WTC11 (cell line): ENCODE measurements at regions of chr15 and their contacts with region 1.

Region 1: GRCh38 chr15:101008158-101009139 is 89.3 kb downstream of the LRRK1 start:
- DNase-seq: peak; percentile 95
- ATAC-seq: peak; percentile 86
- H3K4me3 Mint-ChIP-seq: peak overlapping the region; percentile 80
- H3K27ac Mint-ChIP-seq: no peak overlapping the region
- H3K4me1 Mint-ChIP-seq: peaks cover 35% of the 10 kb centered on the region
- H3K27me3 Mint-ChIP-seq: peaks cover 17% of the 10 kb centered on the region
- CTCF ChIP-seq: peak; percentile 98

Region 2: GRCh38 chr15:100553468-100553867 is 455.0 kb before region 1 on chr15:
- CTCF ChIA-PET with region 1: no interaction called
- POLR2A ChIA-PET with region 1: no interaction called
- DNase-seq: no peak
- ATAC-seq: no peak
- H3K4me3 Mint-ChIP-seq: no peak overlapping the region
- H3K27ac Mint-ChIP-seq: no peak overlapping the region
- H3K4me1 Mint-ChIP-seq: no peaks in the 10 kb centered on the region
- H3K27me3 Mint-ChIP-seq: peaks cover 12% of the 10 kb centered on the region
- CTCF ChIP-seq: no peak

Region 3: GRCh38 chr15:100635406-100636071 is 372.9 kb before region 1 on chr15:
- CTCF ChIA-PET with region 1: interaction called, 16 read pairs
- POLR2A ChIA-PET with region 1: no interaction called
- DNase-seq: peak; percentile 43
- ATAC-seq: peak; percentile 75
- H3K4me3 Mint-ChIP-seq: no peak overlapping the region
- H3K27ac Mint-ChIP-seq: peak overlapping the region; percentile 72
- H3K4me1 Mint-ChIP-seq: peaks cover 48% of the 10 kb centered on the region
- H3K27me3 Mint-ChIP-seq: no peaks in the 10 kb centered on the region
- CTCF ChIP-seq: no peak

Region 4: DNA sequence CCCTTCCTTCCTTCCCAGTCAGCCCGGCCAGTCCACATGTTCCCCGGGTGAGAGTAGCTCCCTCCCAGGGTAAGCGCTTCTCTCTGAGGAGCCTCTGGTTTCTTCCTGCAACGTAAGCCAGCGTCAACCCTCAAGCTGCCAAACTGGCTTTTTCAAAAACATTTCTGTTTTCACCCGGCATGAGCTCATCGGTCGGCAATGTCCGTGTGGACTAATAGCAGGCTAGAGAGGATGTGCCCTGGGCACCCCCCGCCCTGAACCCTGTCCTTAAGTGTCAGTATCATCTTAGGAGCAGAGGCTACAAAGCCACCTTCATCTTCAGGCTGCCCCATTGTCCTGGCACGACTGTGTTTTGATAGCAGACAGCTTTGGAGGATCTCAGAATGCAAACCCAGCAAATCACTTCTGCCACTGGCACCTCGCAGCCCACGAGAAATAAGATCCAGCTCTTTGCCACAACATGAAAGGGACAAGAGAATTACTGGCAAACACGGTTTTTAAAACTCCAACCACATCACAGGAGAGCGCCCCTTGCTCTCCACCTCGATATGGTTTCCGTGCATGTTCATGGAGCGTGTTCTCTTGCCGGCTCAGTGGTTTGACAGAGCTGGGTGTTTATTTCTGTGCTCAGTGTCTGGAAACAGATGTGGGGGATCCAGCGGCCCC is 118.9 kb before region 1 on chr15:
- CTCF ChIA-PET with region 1: interaction called, 16 read pairs
- POLR2A ChIA-PET with region 1: no interaction called
- DNase-seq: no peak
- ATAC-seq: no peak; the same call in 1 of the 2 replicates
- H3K4me3 Mint-ChIP-seq: no peak overlapping the region
- H3K27ac Mint-ChIP-seq: no peak overlapping the region
- H3K4me1 Mint-ChIP-seq: peaks cover 14% of the 10 kb centered on the region
- H3K27me3 Mint-ChIP-seq: no peaks in the 10 kb centered on the region
- CTCF ChIP-seq: no peak

Region 5: GRCh38 chr15:100918034-100918689 is 90.3 kb before region 1 on chr15:
- CTCF ChIA-PET with region 1: interaction called, 253 read pairs
- POLR2A ChIA-PET with region 1: interaction called, 11 read pairs
- DNase-seq: peak; percentile 88
- ATAC-seq: peak; percentile 88
- H3K4me3 Mint-ChIP-seq: peak overlapping the region; percentile 66
- H3K27ac Mint-ChIP-seq: no peak overlapping the region
- H3K4me1 Mint-ChIP-seq: peaks cover 18% of the 10 kb centered on the region
- H3K27me3 Mint-ChIP-seq: peaks cover 58% of the 10 kb centered on the region
- CTCF ChIP-seq: peak; percentile 85

Region 6: GRCh38 chr15:100987143-100987542 is 21.3 kb before region 1 on chr15:
- CTCF ChIA-PET with region 1: interaction called, 49 read pairs
- POLR2A ChIA-PET with region 1: no interaction called
- DNase-seq: no peak
- ATAC-seq: no peak
- H3K4me3 Mint-ChIP-seq: no peak overlapping the region
- H3K27ac Mint-ChIP-seq: no peak overlapping the region
- H3K4me1 Mint-ChIP-seq: peaks cover 13% of the 10 kb centered on the region
- H3K27me3 Mint-ChIP-seq: no peaks in the 10 kb centered on the region; the same call in 1 of the 2 replicates
- CTCF ChIP-seq: no peak

Region 7: DNA sequence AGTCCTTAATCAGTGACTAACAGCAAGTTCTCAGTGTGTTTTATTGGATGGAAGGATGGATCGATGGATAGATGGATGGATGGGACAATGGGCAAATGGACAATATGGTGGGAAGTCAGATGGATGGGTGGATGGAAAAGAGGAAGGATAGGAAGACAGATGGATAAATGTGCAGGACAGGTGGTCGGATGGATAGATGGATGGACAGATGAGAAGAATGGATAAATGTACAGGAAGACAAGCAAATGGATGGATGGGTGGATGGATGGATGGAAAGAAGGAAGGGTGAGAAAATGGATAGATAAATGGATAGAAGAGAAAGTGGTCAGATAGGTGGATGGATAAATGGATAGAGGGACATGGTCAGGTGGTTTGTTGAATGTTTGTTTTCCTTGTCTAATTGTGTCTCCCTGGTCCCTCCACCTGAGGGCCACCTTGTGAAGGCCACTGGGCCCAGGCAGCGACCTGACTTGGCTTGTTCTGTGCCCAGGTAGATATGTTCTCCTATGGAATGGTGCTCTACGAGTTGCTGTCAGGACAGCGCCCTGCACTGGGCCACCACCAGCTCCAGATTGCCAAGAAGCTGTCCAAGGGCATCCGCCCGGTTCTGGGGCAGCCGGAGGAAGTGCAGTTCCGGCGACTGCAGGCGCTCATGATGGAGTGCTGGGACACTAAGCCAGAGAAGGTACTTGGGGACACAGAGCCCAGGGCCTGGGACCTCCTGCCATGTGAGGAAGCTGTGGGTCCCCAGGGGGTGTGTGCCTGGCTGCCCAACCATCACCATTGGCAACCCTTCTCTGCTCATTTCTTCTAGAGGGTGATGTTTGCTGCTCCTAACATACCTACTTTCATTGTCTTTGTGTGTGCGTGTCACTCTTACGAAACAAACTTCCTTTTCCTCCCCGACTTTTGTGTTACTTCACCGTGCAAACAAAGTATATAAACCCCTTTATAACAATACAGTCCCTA is 48.2 kb after region 1 on chr15:
- CTCF ChIA-PET with region 1: interaction called, 4 read pairs
- POLR2A ChIA-PET with region 1: interaction called, 10 read pairs
- DNase-seq: no peak
- ATAC-seq: no peak
- H3K4me3 Mint-ChIP-seq: no peak overlapping the region
- H3K27ac Mint-ChIP-seq: no peak overlapping the region
- H3K4me1 Mint-ChIP-seq: peaks cover 35% of the 10 kb centered on the region
- H3K27me3 Mint-ChIP-seq: no peaks in the 10 kb centered on the region; the same call in none of the 2 replicates
- CTCF ChIP-seq: no peak

Region 8: GRCh38 chr15:101242160-101242998 is 233.9 kb after region 1 on chr15:
- CTCF ChIA-PET with region 1: interaction called, 20 read pairs
- POLR2A ChIA-PET with region 1: no interaction called
- DNase-seq: no peak
- ATAC-seq: no peak
- H3K4me3 Mint-ChIP-seq: no peak overlapping the region
- H3K27ac Mint-ChIP-seq: peak overlapping the region; percentile 75
- H3K4me1 Mint-ChIP-seq: peaks cover 84% of the 10 kb centered on the region
- H3K27me3 Mint-ChIP-seq: no peaks in the 10 kb centered on the region
- CTCF ChIP-seq: no peak